ENCODE measurements at regions of chr1 and their contacts with region 1.

Region 1: DNA sequence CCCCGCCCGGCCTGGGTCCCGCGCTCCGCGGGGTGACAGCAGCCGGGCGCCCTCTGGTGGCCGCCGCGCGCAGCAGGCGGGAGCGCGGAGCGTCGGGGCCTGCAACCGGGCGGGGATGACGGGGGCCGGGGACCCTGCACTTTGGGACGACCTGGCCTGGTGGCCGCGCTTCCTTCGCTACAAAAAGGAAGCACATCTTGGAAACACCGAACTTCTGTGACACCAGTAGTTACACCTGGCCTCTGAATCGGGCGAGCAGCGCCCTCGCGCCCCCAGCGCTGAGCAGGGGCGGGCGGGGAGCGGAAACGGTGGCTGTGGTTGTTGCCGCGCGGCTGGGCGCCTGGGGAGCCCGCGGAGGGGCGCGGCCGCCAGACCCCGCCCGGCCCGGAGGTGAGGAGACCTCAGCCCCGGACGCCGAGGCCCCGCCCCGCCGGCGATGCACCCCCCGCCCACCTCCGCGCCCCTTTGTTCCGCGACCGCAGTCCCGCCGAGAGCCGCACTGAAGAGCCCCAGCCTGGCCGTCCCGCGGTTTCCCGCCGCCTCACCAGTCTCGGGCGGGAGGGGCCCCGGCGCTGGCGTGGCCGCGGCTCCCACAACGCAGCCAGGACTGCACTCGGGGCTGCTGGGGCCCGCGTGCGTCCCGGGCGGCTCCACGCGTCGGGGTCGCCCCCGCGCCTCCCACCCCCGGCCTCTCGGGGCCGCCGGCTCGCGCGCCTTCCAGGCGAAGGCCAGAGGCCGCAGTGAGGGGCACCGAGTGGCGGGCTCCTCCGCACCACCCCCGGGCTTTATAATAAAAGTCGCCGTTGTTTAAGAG is 59.3 kb downstream of the H3-3A start:
- DNase-seq: peak in 1 of 2 donors; percentile 75
- H3K4me3 ChIP-seq: peak overlapping the region; percentile 73 to 84
- H3K27ac ChIP-seq: peak overlapping the region; percentile 16 to 56
- H3K4me1 ChIP-seq: no peaks in the 10 kb centered on the region
- H3K27me3 ChIP-seq: no peaks in the 10 kb centered on the region
- CTCF ChIP-seq: peak; percentile 50 to 96 (median 75)

Region 2: GRCh38 chr1:225999227-225999911 is 122.4 kb before region 1 on chr1 and contains the start of gene SDE2:
- intact Hi-C with region 1: loop called (anchors 5 kb)
- DNase-seq: peak; percentile 98 to 100
- H3K4me3 ChIP-seq: peak within 1 kb of the TSS; percentile 84 to 96
- H3K27ac ChIP-seq: peak within 1 kb of the TSS; percentile 96 to 97
- H3K4me1 ChIP-seq: peaks cover 0 to 27% of the 10 kb centered on the region in 2 donors
- H3K27me3 ChIP-seq: no peaks in the 10 kb centered on the region
- CTCF ChIP-seq: no peak
- total RNA-seq, gene SDE2: 12.3 TPM

Region 3: DNA sequence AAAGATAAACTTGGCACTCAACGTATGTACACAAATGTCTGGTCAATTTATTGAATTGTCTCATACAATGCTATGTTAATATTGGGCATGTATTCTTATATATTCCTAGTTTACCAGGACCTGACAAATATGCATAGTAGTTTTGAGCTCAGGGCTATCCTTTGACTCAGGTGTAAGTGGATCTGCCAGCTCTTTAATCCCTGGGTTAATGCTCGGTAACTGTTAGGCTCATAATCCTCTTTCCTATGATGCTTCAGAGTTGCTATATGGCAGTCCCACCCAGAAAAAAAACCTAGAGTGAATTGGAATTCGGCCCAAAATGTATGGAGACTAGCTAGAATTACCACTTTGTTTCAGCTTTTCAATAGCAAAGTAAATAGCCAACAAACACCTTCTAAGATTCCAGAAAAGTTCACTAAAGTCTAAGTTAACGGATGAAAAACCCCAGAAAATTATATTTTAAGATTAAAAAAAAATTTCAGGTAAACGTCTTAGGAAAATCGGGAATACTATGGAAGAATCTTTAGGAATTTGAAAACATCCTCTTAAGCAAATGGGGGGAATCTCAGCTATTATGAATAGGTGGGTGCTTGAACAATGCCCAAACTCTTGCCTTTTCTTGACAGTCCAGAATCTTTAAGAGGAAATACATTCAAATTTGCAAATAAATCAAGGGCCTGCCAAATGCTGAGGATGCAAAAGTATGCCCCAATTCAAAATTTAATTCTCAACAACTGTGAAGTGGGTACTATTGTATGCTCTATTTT is 48.4 kb before region 1 on chr1:
- intact Hi-C with region 1: loop called (anchors 2 kb)
- DNase-seq: no peak
- H3K4me3 ChIP-seq: no peak overlapping the region
- H3K27ac ChIP-seq: no peak overlapping the region
- H3K4me1 ChIP-seq: peaks cover 0 to under 1% of the 10 kb centered on the region in 2 donors
- H3K27me3 ChIP-seq: no peaks in the 10 kb centered on the region
- CTCF ChIP-seq: no peak

Region 4: GRCh38 chr1:226109829-226110248 is 12.0 kb before region 1 on chr1:
- intact Hi-C with region 1: loop called (anchors 1 kb)
- DNase-seq: peak; percentile 52 to 95
- H3K4me3 ChIP-seq: peak overlapping the region; percentile 56 to 72
- H3K27ac ChIP-seq: peak overlapping the region; percentile 92 to 98
- H3K4me1 ChIP-seq: peaks cover 14 to 38% of the 10 kb centered on the region in 2 donors
- H3K27me3 ChIP-seq: no peaks in the 10 kb centered on the region
- CTCF ChIP-seq: peak in 1 of 3 experiments; percentile 29

Region 5: DNA sequence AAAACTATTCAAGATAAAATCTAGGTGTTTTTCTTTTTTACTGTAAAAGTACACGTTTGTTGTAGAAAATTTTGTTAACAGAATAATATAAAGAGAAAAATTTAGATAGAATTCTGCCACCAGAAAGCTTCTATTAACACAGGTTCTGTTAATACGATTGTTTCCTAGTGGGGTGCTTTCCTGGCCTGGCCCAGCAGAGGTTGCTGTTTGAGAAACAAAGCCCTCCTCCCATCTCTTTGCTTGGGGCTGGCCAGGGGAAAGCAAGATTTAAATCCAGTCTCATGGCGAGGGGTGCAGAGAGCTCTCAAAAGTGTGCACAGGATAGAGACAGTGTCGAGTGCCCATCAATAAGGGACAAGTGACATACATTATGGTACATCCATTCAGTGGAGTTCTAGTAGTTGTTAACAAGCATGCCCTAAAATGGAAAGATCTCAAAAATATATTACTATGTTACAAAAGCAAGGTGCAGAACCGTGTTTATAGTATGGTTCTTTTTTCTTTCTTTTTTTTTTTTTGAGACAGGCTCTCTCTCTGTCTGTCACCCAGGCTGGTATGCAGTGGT is 79.3 kb after region 1 on chr1:
- intact Hi-C with region 1: loop called (anchors 1 kb)
- DNase-seq: no peak
- H3K4me3 ChIP-seq: no peak overlapping the region
- H3K27ac ChIP-seq: no peak overlapping the region
- H3K4me1 ChIP-seq: no peaks in the 10 kb centered on the region
- H3K27me3 ChIP-seq: no peaks in the 10 kb centered on the region
- CTCF ChIP-seq: peak in 1 of 3 experiments; percentile 8